Ascending aorta (tissue), 2 donors: ENCODE measurements at regions of chr6 and their contacts with region 1.

Region 1: GRCh38 chr6:142946181-142946923 is 1.4 kb upstream of the HIVEP2 start:
- DNase-seq: peak; percentile 92 to 99
- H3K4me3 ChIP-seq: peak overlapping the region; percentile 74 to 92
- H3K27ac ChIP-seq: peak overlapping the region; percentile 98 to 99
- H3K4me1 ChIP-seq: peaks cover 6 to 11% of the 10 kb centered on the region in 2 donors
- H3K27me3 ChIP-seq: no peaks in the 10 kb centered on the region
- CTCF ChIP-seq: no peak

Region 2: DNA sequence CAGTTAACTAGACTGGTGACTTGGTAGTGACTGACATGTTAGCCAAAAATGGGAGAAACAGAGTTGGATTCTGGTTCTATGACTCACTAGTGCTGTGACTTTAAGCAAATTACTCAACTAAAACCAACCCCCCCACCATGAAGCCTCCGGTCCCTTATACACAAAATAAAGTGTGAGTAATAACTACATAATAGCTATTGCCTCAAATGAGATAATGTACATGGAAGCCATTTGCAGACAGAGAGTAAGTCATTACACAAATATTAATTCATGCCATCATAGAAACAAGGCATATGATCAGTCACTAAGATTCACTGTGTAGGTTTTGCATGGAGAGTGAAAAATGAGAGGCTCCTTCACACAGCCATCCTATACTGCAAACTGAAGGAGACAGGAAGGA is 113.3 kb before region 1 on chr6:
- intact Hi-C with region 1: loop called (anchors 5 kb)
- DNase-seq: peak in 1 of 2 donors; percentile 72
- H3K4me3 ChIP-seq: peak overlapping the region in 1 of 2 donors; percentile 6
- H3K27ac ChIP-seq: peak overlapping the region in 1 of 2 donors; percentile 55
- H3K4me1 ChIP-seq: peaks cover 0 to 25% of the 10 kb centered on the region in 2 donors
- H3K27me3 ChIP-seq: no peaks in the 10 kb centered on the region
- CTCF ChIP-seq: no peak

Region 3: DNA sequence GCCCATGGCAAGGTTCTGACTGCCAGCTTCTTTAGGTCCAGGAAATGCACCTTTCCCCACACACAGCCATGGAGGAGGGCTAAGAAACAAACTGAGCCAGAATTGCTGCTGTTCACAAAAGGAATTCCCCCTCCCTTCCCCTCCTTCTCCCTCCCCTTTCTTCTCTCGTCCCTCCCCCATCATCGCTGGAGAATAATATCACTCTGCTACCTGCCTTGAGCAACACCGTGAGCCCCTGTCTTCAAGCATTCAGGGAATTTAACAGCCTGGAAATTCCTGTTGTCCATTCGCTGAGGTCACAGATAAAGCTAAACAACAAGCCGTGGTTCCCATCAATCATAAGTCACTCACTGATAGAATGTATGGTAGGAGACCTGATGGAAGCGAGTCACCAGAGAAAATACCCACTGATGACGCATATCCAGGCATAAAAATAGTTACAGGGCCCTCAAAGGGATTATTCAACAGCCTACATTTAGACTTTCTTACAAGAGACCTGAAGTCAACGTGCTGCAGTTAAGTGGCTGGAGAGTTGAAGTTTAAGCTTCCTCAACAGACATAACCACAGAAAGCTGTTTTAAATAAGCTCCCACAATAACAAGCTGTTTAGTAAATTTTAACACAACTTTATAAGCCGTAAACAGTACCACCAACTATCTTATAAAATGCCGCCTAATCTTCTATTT is 61.0 kb before region 1 on chr6:
- intact Hi-C with region 1: loop called (anchors 1 kb)
- DNase-seq: peak in 1 of 2 donors; percentile 80
- H3K4me3 ChIP-seq: peak overlapping the region; percentile 48 to 60
- H3K27ac ChIP-seq: peak overlapping the region; percentile 52 to 60
- H3K4me1 ChIP-seq: peaks cover 0 to 15% of the 10 kb centered on the region in 2 donors
- H3K27me3 ChIP-seq: no peaks in the 10 kb centered on the region
- CTCF ChIP-seq: no peak

Region 4: GRCh38 chr6:143060354-143060805 is 114.0 kb after region 1 on chr6:
- intact Hi-C with region 1: loop called (anchors 1 kb)
- DNase-seq: peak; percentile 75 to 96
- H3K4me3 ChIP-seq: peak overlapping the region; percentile 84 to 89
- H3K27ac ChIP-seq: peak overlapping the region; percentile 89 to 97
- H3K4me1 ChIP-seq: peaks cover 4 to 7% of the 10 kb centered on the region in 2 donors
- H3K27me3 ChIP-seq: no peaks in the 10 kb centered on the region
- CTCF ChIP-seq: peak in 1 of 3 experiments; percentile 6

Region 5: DNA sequence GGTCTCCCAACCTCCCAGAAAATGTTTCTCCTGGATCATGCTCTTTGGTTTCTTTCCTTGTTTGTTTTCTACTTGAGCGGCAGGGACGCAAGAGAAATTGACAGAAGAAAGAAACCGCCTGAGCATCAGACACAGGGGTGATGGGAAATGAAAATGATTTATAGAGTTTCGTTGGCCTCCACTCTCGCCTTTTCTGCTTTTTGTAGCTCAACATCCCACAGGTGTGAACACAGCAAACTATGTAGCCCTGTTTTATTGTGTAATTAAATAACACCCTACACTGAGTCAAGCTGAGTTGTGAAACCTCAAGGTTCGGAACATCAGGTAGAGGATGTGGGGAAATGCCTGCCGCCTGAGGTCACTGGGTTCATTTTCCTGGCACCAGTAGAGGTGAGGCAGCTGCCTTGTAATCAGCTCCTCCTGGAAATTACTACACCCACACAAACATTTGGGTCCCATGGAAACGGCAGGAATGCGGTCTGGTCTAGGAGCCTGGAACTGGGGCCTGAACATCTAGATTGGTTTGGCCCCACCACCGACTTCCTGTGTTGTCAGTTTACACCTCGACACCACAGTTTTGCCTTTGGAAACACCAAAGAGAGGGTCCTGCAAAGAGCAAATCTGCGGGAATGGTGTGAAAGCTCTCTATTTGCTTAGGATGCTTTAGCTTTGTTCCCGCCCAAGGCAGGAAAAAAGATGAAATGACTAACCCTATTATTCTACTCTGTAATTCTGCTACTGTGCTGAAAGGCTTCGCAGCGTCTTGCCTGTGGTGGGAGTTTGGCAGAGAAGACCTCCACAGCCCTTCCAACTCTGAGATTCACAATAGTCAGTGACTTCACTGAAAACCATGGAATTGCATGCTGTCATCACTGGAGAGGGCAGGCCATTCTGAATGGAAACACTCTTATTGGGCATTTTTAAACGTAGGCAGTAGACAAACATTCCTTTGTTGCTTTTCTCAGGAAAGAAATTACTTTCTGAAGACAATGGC is 451.2 kb after region 1 on chr6:
- intact Hi-C with region 1: loop called (anchors 1 kb)
- DNase-seq: peak; percentile 64 to 90
- H3K4me3 ChIP-seq: no peak overlapping the region
- H3K27ac ChIP-seq: peak overlapping the region; percentile 51 to 63
- H3K4me1 ChIP-seq: peaks cover 5 to 23% of the 10 kb centered on the region in 2 donors
- H3K27me3 ChIP-seq: no peaks in the 10 kb centered on the region
- CTCF ChIP-seq: no peak